Left cardiac atrium (tissue), 4 donors: ENCODE measurements at regions of chr14 and their contacts with region 1.

Region 1: DNA sequence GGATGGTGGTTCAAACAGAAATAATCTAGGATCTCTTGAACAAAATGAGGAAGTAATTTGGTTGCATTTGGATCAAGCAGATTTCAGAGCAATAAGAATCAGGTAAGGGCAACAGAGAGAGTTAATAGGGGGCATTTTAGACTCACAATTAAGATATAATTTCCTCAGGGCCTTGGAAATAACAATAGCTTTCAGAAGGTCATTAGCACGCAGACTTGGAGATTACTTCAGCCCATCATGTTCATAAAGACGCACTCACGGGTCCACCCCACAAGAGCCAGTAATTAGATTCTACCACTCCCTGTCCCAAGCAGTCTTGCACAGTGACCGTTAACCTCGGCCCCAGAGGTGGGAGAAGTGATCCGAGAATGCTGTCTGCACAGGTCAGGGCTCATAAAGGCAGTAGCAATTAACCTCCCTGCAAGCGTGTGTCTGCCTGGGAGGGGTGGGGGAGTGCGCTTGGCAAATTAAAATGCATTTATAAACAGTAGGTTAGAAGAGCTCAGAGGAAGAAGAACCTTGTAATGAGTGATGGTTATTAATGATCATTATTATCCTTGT is 125.7 kb upstream of the CCDC196 start:
- DNase-seq: no peak
- ATAC-seq: no peak

Region 2: DNA sequence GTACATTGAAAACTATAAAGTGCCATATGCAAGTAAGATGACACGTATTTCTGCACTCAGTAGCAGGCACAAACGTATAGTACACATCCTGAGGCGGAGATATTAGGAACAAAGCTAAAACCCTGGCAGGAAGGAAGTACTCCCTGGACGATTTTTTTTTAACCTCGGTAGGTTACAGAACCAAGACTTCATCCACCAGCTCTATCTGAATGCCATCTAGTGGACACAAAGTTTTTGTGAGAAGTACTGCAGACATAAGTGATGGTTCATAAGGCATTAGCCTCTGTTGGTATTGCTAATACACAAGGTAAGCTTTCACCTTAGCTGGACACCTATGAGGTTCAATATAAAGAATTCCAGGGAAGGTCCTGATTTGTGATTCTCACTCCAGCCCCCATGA is 42.7 kb after region 1 on chr14:
- intact Hi-C with region 1: loop called in 1 of 2 experiments (anchors 5 kb)
- DNase-seq: no peak
- ATAC-seq: peak in 1 of 2 donors; percentile 55